Posterior vena cava (tissue), 2 donors: ENCODE measurements at regions of chr6 and their contacts with region 1.

Region 1: GRCh38 chr6:53336070-53336469 is 12.7 kb downstream of the ELOVL5 start:
- DNase-seq: no peak

Region 2: DNA sequence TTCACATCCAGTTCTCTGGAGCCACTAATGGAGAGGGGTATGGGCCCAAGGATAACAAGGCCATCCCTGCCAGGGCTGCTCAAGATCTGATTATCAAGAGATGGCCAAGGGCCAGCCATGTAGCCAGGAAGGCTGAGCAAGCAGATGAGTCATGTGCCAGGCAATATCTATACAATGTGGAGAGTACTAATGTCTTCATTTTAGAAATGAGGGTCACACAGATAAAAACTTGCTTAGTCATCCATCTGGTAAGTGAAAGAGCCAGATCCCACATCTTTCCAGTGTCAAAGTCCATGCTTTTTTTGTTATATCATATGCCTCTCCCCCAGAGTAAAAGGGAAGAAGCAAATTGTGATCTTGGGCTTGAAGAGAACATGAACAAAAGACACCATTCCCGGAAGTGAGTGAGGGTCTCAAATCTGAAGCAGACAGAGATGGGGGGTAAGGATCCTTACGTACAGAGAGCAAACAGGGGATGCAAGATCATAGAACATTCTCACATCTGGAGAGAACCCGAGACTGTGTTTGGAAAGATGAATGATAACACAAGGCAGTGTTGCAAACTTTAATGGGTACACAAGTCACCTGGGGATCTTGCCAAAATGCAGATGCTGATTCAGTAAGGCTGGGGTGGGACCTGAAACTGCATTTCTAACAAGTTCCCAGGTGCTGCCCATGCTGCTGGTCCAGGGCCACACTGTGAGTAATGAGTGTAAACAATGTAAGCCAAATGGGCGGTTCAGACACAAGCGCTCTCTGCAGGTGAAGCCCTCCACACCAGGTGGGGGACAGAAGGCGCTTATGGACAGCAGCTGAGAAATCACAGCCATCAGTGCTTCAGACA is 406.5 kb before region 1 on chr6:
- intact Hi-C with region 1: no loop called
- DNase-seq: no peak

Region 3: DNA sequence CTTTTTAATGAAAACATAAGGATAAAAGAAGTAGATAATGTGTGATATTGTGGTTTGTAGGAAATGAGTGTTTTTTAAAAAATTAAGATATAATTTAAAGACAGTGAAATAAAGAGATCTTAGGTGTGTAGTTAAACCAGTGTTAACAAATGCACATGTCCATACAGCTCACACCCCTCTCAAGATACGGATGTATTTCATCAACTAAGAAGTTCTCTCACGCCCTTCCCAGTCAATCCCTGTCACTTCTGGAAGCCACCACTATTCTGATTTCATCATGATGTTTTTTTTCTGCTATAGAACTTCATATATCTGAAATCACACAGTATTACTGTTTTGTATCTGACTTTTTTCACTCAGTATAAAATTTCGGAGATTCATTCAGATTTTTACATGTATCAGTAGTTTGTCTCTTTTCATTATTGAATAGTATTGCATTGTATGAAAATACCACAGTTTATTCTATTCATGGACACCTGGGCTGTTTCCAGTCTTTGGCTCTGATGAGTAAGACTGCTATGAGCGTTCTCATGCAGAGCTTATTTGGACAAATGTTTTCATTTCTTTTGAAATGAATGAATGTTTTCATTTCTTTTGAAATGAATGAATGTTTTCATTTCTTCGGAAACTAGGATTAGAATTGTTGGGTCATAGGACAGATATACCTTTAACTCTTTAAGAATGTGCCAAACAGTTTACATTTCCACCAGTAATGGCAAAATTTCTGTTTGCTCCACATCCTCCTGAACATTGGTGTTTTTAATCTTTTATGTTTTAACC is 62.4 kb after region 1 on chr6:
- intact Hi-C with region 1: loop called in 1 of 2 experiments (anchors 2 kb)
- DNase-seq: no peak